ENCODE measurements at regions of chr14 and their contacts with region 1.

Region 1: GRCh38 chr14:22370084-22370847 is 218.8 kb downstream of the DAD1 start:
- DNase-seq: no peak
- H3K4me3 Mint-ChIP-seq: no peak overlapping the region
- H3K27ac Mint-ChIP-seq: no peak overlapping the region
- H3K4me1 Mint-ChIP-seq: no peaks in the 10 kb centered on the region
- H3K27me3 Mint-ChIP-seq: no peaks in the 10 kb centered on the region

Region 2: GRCh38 chr14:22163051-22163450 is 207.2 kb before region 1 on chr14:
- CTCF ChIA-PET with region 1: no interaction called
- intact Hi-C with region 1: no loop called
- DNase-seq: no peak
- H3K4me3 Mint-ChIP-seq: peak overlapping the region; percentile 73
- H3K27ac Mint-ChIP-seq: peak overlapping the region; percentile 82
- H3K4me1 Mint-ChIP-seq: peaks cover 15% of the 10 kb centered on the region
- H3K27me3 Mint-ChIP-seq: no peaks in the 10 kb centered on the region

Region 3: DNA sequence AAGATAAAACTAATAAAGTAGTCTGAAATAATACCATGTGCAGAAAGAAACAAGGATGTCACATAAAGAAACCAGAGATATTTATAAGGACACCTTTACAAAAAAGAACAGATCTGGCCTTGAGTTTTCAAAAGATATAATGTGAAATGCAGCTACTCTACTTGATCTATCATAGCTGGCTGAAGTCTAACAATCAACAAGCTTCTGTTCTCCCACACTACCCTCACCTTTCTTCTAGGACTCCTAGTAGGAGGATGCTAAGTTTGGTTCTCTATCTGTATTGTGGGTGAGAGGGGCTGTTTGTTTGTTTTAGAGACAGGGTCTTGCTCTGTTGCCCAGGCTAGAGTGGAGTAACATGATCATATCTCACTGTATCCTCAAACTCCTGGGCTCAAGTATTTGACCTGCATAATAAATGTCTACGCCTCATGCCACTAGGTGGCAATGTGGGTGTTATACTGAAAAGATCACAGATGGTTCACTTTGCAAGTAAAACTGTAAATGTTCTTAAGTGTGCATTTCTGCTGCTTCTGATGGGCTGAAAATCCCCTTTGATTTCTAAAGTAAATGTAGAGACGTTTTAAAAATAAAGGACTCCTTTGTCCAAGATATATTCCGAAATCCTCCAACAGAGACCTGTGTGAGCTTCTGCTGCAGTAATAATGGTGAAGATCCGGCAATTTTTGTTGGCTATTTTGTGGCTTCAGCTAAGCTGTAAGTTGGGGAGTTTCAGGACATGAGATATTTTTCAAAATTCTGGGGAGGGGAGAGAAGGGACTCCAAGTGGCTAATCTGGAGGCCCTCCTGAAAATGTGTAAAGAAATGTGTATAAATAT is 50.5 kb before region 1 on chr14:
- CTCF ChIA-PET with region 1: no interaction called
- intact Hi-C with region 1: loop called (anchors 5 kb)
- DNase-seq: peak; percentile 26
- H3K4me3 Mint-ChIP-seq: peak overlapping the region; percentile 63
- H3K27ac Mint-ChIP-seq: peak overlapping the region; percentile 83
- H3K4me1 Mint-ChIP-seq: no peaks in the 10 kb centered on the region
- H3K27me3 Mint-ChIP-seq: no peaks in the 10 kb centered on the region

Region 4: DNA sequence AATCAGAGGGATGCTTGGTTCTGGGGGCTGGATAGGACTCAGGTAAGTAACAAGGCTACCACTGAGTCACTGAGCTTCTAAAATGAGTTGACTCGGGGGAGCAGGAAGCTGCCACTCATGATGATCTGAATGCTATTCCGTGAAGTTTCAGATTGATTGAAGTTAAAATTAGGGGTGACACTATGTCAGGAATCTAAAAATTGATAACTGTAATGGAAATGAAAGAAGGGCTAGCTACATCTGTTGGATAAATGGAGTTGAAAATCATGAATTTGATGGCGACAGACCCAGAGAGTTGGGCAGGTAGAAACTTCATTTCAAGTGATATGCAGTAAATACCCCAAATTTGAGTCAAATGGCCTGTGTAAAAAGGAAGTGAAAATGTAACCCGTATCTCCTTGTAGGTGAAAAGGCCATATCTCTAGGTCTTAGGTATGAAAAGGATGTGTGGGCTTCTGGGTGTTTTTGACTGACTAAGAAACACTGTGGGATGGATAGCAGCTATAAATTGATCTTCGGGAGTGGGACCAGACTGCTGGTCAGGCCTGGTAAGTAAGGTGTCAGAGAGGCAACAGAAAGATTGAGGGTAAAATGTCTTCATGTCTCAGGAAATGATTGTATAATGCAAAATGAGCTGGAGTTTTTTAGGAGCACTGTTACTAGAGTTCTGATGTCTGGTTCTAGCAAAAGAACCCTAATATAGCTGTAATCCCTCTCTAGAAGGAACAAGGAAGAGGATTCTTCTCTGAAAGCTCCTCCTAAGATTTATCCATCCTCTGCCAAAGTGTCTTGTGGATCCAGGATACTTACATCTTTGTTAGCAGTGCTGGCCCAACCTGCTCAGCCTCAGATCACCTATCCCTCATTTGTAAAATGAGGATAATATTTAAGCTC is 161.4 kb after region 1 on chr14:
- CTCF ChIA-PET with region 1: no interaction called
- intact Hi-C with region 1: no loop called
- DNase-seq: peak; percentile 65
- H3K4me3 Mint-ChIP-seq: peak overlapping the region; percentile 77
- H3K27ac Mint-ChIP-seq: peak overlapping the region; percentile 98
- H3K4me1 Mint-ChIP-seq: peaks cover 82% of the 10 kb centered on the region
- H3K27me3 Mint-ChIP-seq: no peaks in the 10 kb centered on the region